Naive thymus-derived CD4-positive, alpha-beta T cell (primary cell): ENCODE measurements at regions of chrX and their contacts with region 1.

Region 1: DNA sequence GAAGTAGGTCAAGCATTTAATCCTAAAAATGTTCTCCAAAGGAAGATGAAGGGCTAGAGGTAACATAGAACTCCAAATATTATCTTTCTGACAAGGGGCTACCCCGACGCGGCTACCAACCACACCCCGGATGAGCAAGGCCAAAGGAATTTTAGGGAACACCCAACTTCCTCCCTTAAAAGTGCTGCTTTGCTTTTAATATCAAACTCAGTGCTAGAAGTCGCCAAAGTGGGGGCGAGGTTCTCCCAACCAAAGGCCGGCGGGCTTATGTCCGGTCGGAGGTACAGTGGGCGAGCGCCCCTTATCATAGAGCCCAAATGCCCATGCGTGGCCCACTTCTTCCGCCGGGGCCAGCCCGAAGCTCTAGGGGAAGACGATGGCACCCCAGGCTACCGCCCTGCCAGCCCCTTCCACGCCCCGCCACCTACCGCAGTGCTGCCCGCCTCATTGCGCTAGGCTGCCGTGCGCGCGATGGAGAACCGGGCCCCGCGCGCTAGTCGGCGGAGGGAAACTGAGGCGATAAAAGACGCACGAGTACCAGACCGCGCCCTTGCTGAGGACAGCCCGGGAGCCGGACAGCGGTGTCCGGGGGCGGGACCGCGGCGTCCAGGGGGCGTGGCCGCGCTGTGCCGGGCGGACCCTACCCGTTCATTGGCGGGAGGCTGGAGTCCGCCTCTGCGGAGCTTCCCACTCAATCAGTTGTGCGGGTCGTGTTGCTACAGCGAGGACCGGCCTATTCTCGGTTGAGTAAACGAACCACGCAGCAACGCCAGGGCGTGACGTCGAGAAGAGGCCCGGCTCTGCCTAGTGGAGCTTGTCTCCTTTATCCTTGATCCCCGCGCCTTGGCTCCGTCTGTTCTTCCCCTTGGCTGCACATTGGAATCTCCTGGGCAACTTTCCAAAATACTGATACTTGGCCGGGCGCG is at the start of gene ACOT9:
- DNase-seq: peak; percentile 26 to 84 (median 49)
- ATAC-seq: peak; percentile 97
- H3K4me3 ChIP-seq: peak within 1 kb of the TSS; percentile 75
- H3K4me3 Mint-ChIP-seq: peak within 1 kb of the TSS; percentile 77 to 91 (median 86)
- H3K27ac ChIP-seq: peak within 1 kb of the TSS; percentile 49
- H3K27ac Mint-ChIP-seq: peak within 1 kb of the TSS; percentile 69 to 90 (median 75)
- H3K4me1 ChIP-seq: peaks cover 0 to 14% of the 10 kb centered on the region in 2 donors
- H3K4me1 Mint-ChIP-seq: peaks cover 13 to 36% (median 18%) of the 10 kb centered on the region in 7 donors
- H3K27me3 ChIP-seq: no peaks in the 10 kb centered on the region
- H3K27me3 Mint-ChIP-seq: no peaks in the 10 kb centered on the region
- total RNA-seq, gene ACOT9: 8.2 to 40.1 (median 9.1) TPM

Region 2: DNA sequence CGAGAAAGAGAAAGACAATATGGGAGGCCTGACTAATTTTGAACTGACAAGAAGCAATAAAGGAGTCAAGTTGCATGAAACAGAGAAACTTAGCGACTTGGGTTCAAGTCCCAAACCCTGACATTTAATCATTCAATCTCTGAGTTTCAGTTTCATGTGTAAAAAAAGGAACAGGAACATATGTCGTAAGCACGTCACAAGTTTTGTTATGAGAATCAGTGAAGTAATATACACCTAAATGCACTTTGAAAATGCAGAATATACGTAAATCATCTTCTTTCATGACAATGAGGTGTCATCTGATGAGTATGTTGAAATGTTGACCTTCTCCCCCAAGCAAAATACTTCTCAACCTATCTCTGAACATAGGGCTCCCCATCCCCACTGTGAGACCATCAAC is 10.3 kb before region 1 on chrX:
- CTCF ChIA-PET with region 1: no interaction called
- POLR2A ChIA-PET with region 1: no interaction called
- intact Hi-C with region 1: loop called in 1 of 2 experiments (anchors 1 kb)
- DNase-seq: no peak
- ATAC-seq: peak; percentile 48
- H3K4me3 ChIP-seq: no peak overlapping the region
- H3K4me3 Mint-ChIP-seq: peak overlapping the region in 1 of 10 donors; percentile 62
- H3K27ac ChIP-seq: no peak overlapping the region
- H3K27ac Mint-ChIP-seq: peak overlapping the region in 2 of 9 donors; percentile 46 to 82
- H3K4me1 ChIP-seq: peaks cover 0 to 6% of the 10 kb centered on the region in 2 donors
- H3K4me1 Mint-ChIP-seq: peaks cover 0 to 26% (median 0%) of the 10 kb centered on the region in 7 donors
- H3K27me3 ChIP-seq: no peaks in the 10 kb centered on the region
- H3K27me3 Mint-ChIP-seq: no peaks in the 10 kb centered on the region

Region 3: GRCh38 chrX:23773601-23774175 is 30.7 kb after region 1 on chrX:
- CTCF ChIA-PET with region 1: no interaction called
- POLR2A ChIA-PET with region 1: no interaction called
- intact Hi-C with region 1: loop called in 1 of 2 experiments (anchors 1 kb)
- DNase-seq: peak in 7 of 9 donors; percentile 21 to 72 (median 64)
- ATAC-seq: peak; percentile 100
- H3K4me3 ChIP-seq: no peak overlapping the region
- H3K4me3 Mint-ChIP-seq: peak overlapping the region; percentile 36 to 81 (median 71)
- H3K27ac ChIP-seq: peak overlapping the region; percentile 71
- H3K27ac Mint-ChIP-seq: peak overlapping the region; percentile 92 to 98 (median 94)
- H3K4me1 ChIP-seq: peaks cover 0 to 6% of the 10 kb centered on the region in 2 donors
- H3K4me1 Mint-ChIP-seq: peaks cover 0 to 15% (median 9%) of the 10 kb centered on the region in 7 donors
- H3K27me3 ChIP-seq: no peaks in the 10 kb centered on the region
- H3K27me3 Mint-ChIP-seq: no peaks in the 10 kb centered on the region

Region 4: DNA sequence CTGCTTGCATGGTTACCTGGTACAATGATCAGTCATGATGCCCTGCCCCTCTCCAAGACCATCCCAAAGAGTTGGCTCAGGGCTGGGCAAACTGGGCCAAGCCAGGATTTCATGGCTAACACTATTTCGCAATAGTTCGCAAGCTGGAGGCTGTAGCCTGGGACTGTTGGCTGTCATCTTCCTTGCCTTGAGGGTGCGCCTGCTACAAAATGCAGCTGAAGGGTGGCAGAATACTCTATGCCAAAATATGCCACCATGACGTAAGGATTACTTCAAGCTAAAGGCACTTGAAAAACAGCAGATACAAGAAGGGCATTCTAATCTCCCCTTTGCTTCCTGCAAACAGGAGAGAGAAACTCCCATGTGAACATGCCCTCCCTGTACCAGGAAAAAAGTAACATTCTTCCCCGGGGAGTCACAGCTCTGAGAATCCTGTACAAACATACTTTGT is 61.0 kb after region 1 on chrX:
- CTCF ChIA-PET with region 1: no interaction called
- POLR2A ChIA-PET with region 1: no interaction called
- intact Hi-C with region 1: no loop called
- DNase-seq: no peak
- ATAC-seq: no peak
- H3K4me3 ChIP-seq: no peak overlapping the region
- H3K4me3 Mint-ChIP-seq: no peak overlapping the region
- H3K27ac ChIP-seq: no peak overlapping the region
- H3K27ac Mint-ChIP-seq: no peak overlapping the region
- H3K4me1 ChIP-seq: no peaks in the 10 kb centered on the region
- H3K4me1 Mint-ChIP-seq: peaks cover 0 to 8% (median 2%) of the 10 kb centered on the region in 7 donors
- H3K27me3 ChIP-seq: no peaks in the 10 kb centered on the region
- H3K27me3 Mint-ChIP-seq: no peaks in the 10 kb centered on the region

Region 5: GRCh38 chrX:23854945-23855344 is 112.0 kb after region 1 on chrX:
- CTCF ChIA-PET with region 1: no interaction called
- POLR2A ChIA-PET with region 1: no interaction called
- intact Hi-C with region 1: no loop called
- DNase-seq: no peak
- ATAC-seq: no peak
- H3K4me3 ChIP-seq: no peak overlapping the region
- H3K4me3 Mint-ChIP-seq: no peak overlapping the region
- H3K27ac ChIP-seq: no peak overlapping the region
- H3K27ac Mint-ChIP-seq: no peak overlapping the region
- H3K4me1 ChIP-seq: no peaks in the 10 kb centered on the region
- H3K4me1 Mint-ChIP-seq: no peaks in the 10 kb centered on the region
- H3K27me3 ChIP-seq: no peaks in the 10 kb centered on the region
- H3K27me3 Mint-ChIP-seq: no peaks in the 10 kb centered on the region